Spleen (tissue), 13 donors: ENCODE measurements at regions of chr6 and their contacts with region 1.

Region 1: DNA sequence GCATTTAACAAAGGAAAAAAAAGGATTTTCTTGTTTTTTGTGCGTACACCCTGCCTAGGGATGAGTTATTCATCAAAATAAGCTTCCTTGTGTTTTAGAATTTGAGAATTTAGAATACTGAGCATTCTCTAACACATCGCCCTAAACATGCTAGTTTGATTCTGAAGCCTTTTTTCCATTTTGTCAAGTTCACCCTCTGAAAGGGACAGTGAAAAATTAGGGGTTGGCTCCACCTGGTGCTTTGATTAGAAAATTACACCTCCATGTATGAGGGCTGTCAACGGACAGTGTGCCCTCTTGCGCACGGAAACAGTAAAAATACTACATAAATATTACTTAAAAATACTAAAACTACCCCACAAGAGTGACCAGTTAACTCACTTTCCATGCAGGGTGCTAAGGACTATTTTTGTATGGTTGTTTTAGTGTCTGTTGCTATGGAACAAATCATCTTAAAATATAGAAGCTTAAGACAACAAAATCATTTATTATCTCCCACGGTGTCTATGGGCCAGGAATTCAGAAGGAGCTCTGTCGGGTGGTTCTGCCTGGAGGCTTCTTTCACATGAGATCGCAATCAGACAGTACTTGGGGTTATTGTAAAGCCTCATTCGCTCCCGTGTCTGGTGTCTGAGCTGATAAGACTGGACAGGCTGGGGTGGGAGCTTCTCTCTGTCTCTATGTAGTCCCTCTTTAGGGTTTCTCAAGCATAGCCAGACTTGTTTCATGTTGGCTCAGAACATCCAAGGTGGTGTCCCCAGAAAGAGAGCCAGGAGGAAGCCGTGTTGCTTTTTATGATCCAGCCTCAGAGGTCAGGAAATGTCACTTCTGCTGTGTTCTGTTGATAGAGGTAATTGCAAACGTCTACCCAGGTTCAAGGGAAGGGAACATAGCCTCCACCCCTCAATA is 41.1 kb upstream of the TMEM170B start:
- DNase-seq: no peak
- H3K4me3 ChIP-seq: no peak overlapping the region
- H3K27ac ChIP-seq: peak overlapping the region in 7 of 8 donors; percentile 20 to 80 (median 51)
- H3K4me1 ChIP-seq: peaks cover 11 to 62% (median 37%) of the 10 kb centered on the region in 6 donors
- H3K27me3 ChIP-seq: no peaks in the 10 kb centered on the region
- CTCF ChIP-seq: peak; percentile 88 to 97 (median 92)
- POLR2A ChIP-seq: no peak

Region 2: DNA sequence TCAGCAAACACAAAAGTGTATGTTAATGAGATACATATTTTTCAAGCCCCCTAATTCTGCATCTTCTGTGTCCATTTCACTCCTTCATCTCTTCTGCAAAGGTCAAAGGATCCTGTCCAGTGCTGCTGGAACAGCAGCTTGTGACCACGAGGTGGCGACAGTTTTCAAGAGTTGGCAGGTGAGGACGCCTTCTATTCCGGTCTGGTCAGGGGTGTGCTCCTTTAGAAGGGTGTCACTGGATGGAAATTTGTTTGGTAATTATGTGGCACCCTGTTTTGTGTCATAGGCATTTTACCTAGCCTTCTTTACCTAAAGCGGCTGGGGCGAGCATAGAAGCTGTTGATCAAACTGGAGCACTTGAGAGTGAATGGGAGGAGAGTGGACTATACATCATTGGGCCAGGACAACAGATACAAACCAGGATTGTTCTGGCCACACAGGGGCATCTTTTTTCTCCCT is 352.0 kb before region 1 on chr6:
- intact Hi-C with region 1: loop called (anchors 2 kb)
- DNase-seq: peak; percentile 90
- H3K4me3 ChIP-seq: no peak overlapping the region
- H3K27ac ChIP-seq: peak overlapping the region in 1 of 8 donors; percentile 70
- H3K4me1 ChIP-seq: peaks cover 0 to 24% (median 5%) of the 10 kb centered on the region in 6 donors
- H3K27me3 ChIP-seq: no peaks in the 10 kb centered on the region
- CTCF ChIP-seq: peak; percentile 76 to 95 (median 92)
- POLR2A ChIP-seq: no peak

Region 3: DNA sequence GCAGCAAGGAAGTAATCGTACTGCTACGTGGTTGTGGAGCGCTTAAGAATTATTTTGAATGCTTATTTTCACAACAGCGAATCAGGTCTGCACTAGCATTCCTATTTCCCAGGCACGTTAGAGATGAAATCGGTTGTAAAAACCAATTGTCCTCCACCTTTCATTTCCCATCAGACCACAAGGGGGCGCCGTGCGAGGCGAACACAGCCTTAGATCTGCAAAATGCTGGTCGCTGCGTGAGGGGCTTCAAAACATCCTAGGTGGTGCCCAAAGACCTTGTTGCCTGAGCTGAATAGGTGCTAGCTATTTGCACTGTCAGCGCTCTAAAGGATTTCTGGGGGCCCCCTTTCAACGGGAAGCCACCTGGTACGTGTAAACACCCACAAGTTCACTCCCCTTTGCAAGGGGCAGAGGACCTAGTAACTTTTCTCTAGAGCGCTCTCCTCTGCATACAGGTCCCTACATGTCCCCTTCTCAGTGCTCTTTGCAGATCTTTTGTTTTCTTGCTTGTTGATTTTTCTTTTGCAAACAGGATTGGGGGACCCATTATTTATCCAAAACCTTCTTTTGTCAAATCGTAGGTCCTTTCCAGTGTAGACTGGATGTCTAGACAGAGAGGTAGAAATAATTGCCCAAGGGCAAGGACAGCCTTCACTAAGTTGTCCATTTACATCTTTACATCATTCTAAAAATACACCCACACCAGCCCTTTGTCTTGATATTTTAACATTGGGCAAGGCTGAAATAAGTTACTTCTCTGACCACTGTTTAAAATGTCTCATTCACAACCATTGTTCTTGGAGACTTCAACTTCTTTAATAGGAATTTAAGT is 323.7 kb before region 1 on chr6:
- intact Hi-C with region 1: loop called (anchors 10 kb)
- DNase-seq: peak; percentile 91
- H3K4me3 ChIP-seq: peak overlapping the region in 1 of 8 donors; percentile 42
- H3K27ac ChIP-seq: no peak overlapping the region
- H3K4me1 ChIP-seq: peaks cover 6 to 13% (median 9%) of the 10 kb centered on the region in 6 donors
- H3K27me3 ChIP-seq: no peaks in the 10 kb centered on the region
- CTCF ChIP-seq: peak; percentile 70 to 89 (median 83)
- POLR2A ChIP-seq: no peak